Caco-2 (cell line): ENCODE measurements at regions of chr17 and their contacts with region 1.

Region 1: GRCh38 chr17:3048767-3049471 is 14.5 kb downstream of the OR1D5 start:
- DNase-seq: peak; percentile 99
- H3K4me3 ChIP-seq: peak overlapping the region; percentile 61
- H3K4me3 Mint-ChIP-seq: peak overlapping the region; percentile 95
- H3K27ac Mint-ChIP-seq: peak overlapping the region; percentile 95
- H3K4me1 ChIP-seq: no peaks in the 10 kb centered on the region
- H3K4me1 Mint-ChIP-seq: no peaks in the 10 kb centered on the region
- H3K27me3 ChIP-seq: no peaks in the 10 kb centered on the region
- H3K27me3 Mint-ChIP-seq: peaks cover 5% of the 10 kb centered on the region
- CTCF ChIP-seq: peak; percentile 69 to 93

Region 2: DNA sequence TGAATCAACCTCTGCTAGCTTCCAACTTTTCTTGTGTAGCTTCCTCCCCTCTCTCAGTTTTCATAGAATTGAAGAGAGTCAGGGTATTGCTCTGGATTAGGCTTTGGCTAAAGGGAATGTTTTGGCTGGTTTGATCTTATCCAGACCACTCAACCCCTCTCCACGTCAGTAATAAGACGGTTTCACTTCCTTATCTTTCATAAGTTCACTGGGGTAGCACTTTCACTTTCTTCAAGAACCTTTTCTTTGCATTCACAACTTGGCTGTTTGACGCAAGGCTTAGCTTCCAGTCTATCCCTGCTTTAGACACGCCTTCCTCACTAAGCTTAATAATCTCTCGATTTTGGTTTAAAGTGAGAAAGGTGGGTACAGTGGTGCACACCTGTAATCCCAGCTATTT is 118.7 kb after region 1 on chr17:
- CTCF ChIA-PET with region 1: no interaction called
- POLR2A ChIA-PET with region 1: no interaction called
- intact Hi-C with region 1: loop called (anchors 1 kb)
- DNase-seq: no peak
- H3K4me3 ChIP-seq: no peak overlapping the region
- H3K4me3 Mint-ChIP-seq: no peak overlapping the region
- H3K27ac Mint-ChIP-seq: no peak overlapping the region
- H3K4me1 ChIP-seq: no peaks in the 10 kb centered on the region
- H3K4me1 Mint-ChIP-seq: no peaks in the 10 kb centered on the region
- H3K27me3 ChIP-seq: no peaks in the 10 kb centered on the region
- H3K27me3 Mint-ChIP-seq: peaks cover 18% of the 10 kb centered on the region
- CTCF ChIP-seq: no peak

Region 3: GRCh38 chr17:3335884-3336283 is 287.0 kb after region 1 on chr17:
- CTCF ChIA-PET with region 1: no interaction called
- POLR2A ChIA-PET with region 1: no interaction called
- intact Hi-C with region 1: loop called (anchors 10 kb)
- DNase-seq: peak in 1 of 2 experiments; percentile 22
- H3K4me3 ChIP-seq: no peak overlapping the region
- H3K4me3 Mint-ChIP-seq: no peak overlapping the region
- H3K27ac Mint-ChIP-seq: no peak overlapping the region
- H3K4me1 ChIP-seq: no peaks in the 10 kb centered on the region
- H3K4me1 Mint-ChIP-seq: no peaks in the 10 kb centered on the region
- H3K27me3 ChIP-seq: no peaks in the 10 kb centered on the region
- H3K27me3 Mint-ChIP-seq: peaks cover 11% of the 10 kb centered on the region
- CTCF ChIP-seq: peak; percentile 20 to 52

Region 4: GRCh38 chr17:3447625-3448024 is 398.7 kb after region 1 on chr17:
- CTCF ChIA-PET with region 1: no interaction called
- POLR2A ChIA-PET with region 1: no interaction called
- intact Hi-C with region 1: loop called (anchors 5 kb)
- DNase-seq: peak; percentile 34 to 38
- H3K4me3 ChIP-seq: no peak overlapping the region
- H3K4me3 Mint-ChIP-seq: no peak overlapping the region
- H3K27ac Mint-ChIP-seq: no peak overlapping the region
- H3K4me1 ChIP-seq: no peaks in the 10 kb centered on the region
- H3K4me1 Mint-ChIP-seq: peaks cover 7% of the 10 kb centered on the region
- H3K27me3 ChIP-seq: no peaks in the 10 kb centered on the region
- H3K27me3 Mint-ChIP-seq: no peaks in the 10 kb centered on the region
- CTCF ChIP-seq: peak in 1 of 2 experiments; percentile 36

Region 5: GRCh38 chr17:3647769-3648555 is 599.0 kb after region 1 on chr17:
- CTCF ChIA-PET with region 1: interaction called, 7 read pairs
- POLR2A ChIA-PET with region 1: no interaction called
- intact Hi-C with region 1: loop called (anchors 5 kb)
- DNase-seq: peak; percentile 51 to 54
- H3K4me3 ChIP-seq: no peak overlapping the region
- H3K4me3 Mint-ChIP-seq: no peak overlapping the region
- H3K27ac Mint-ChIP-seq: no peak overlapping the region
- H3K4me1 ChIP-seq: no peaks in the 10 kb centered on the region
- H3K4me1 Mint-ChIP-seq: no peaks in the 10 kb centered on the region
- H3K27me3 ChIP-seq: no peaks in the 10 kb centered on the region
- H3K27me3 Mint-ChIP-seq: no peaks in the 10 kb centered on the region
- CTCF ChIP-seq: peak; percentile 30 to 35